CD4-positive, alpha-beta memory T cell (primary cell): ENCODE measurements at regions of chr16 and their contacts with region 1.

Region 1: DNA sequence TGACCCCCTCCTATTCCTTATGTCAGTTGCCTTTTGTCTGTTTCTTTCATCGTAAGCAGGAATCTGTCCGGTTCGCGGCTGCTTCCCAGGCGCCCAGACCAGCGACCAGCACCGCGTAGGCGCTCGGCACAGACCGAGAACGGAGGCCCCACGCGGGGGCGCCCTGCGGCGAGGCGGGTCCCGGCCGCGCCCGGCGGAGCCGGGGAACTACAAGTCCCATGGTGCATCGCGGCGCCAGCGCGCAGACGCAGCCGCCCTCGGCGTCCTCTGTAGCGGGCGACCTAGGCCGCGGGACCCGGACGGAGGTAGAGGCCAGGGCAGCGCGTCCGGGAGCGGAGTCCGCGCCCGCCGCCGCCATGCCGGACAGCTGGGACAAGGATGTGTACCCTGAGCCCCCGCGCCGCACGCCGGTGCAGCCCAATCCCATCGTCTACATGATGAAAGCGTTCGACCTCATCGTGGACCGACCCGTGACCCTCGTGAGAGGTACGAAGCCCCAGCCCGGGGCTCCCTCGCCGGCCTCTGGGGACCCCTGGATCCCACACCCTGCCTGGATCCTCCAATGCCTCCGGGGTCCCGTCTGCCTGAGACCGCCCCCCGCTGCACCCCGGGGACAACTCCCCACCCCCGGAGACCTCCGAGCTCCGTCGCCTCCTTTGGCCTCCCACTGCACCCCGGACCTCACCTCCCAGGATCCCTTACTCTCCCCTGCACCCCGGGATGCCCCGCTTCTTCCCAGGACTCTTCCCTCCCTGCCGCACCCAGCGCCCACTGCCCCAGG is at the start of gene NDUFB10:
- DNase-seq: peak; percentile 84 to 90 (median 87)
- H3K4me3 ChIP-seq: peak within 1 kb of the TSS; percentile 69 to 89
- H3K4me3 Mint-ChIP-seq: peak within 1 kb of the TSS; percentile 88 to 94 (median 92)
- H3K27ac ChIP-seq: peak within 1 kb of the TSS; percentile 78
- H3K27ac Mint-ChIP-seq: peak within 1 kb of the TSS; percentile 86 to 99 (median 95)
- H3K4me1 ChIP-seq: peaks cover 47% of the 10 kb centered on the region
- H3K4me1 Mint-ChIP-seq: peaks cover 26 to 53% (median 40%) of the 10 kb centered on the region in 4 donors
- H3K27me3 ChIP-seq: no peaks in the 10 kb centered on the region
- H3K27me3 Mint-ChIP-seq: no peaks in the 10 kb centered on the region
- total RNA-seq, gene NDUFB10: 76.5 to 86.2 TPM

Region 2: GRCh38 chr16:1942810-1943726 is 16.4 kb before region 1 on chr16 and contains the start of gene MSRB1:
- CTCF ChIA-PET with region 1: interaction called, 4 read pairs
- POLR2A ChIA-PET with region 1: interaction called, 34 read pairs
- intact Hi-C with region 1: loop called (anchors 1 kb)
- DNase-seq: peak; percentile 97 to 99 (median 98)
- H3K4me3 ChIP-seq: peak within 1 kb of the TSS; percentile 52 to 90
- H3K4me3 Mint-ChIP-seq: peak within 1 kb of the TSS; percentile 82 to 91 (median 86)
- H3K27ac ChIP-seq: peak within 1 kb of the TSS; percentile 58
- H3K27ac Mint-ChIP-seq: peak within 1 kb of the TSS; percentile 64 to 91 (median 70)
- H3K4me1 ChIP-seq: peaks cover 21% of the 10 kb centered on the region
- H3K4me1 Mint-ChIP-seq: peaks cover 0 to 26% (median 7%) of the 10 kb centered on the region in 4 donors
- H3K27me3 ChIP-seq: no peaks in the 10 kb centered on the region
- H3K27me3 Mint-ChIP-seq: no peaks in the 10 kb centered on the region
- total RNA-seq, gene MSRB1: 9.3 to 10.6 TPM

Region 3: DNA sequence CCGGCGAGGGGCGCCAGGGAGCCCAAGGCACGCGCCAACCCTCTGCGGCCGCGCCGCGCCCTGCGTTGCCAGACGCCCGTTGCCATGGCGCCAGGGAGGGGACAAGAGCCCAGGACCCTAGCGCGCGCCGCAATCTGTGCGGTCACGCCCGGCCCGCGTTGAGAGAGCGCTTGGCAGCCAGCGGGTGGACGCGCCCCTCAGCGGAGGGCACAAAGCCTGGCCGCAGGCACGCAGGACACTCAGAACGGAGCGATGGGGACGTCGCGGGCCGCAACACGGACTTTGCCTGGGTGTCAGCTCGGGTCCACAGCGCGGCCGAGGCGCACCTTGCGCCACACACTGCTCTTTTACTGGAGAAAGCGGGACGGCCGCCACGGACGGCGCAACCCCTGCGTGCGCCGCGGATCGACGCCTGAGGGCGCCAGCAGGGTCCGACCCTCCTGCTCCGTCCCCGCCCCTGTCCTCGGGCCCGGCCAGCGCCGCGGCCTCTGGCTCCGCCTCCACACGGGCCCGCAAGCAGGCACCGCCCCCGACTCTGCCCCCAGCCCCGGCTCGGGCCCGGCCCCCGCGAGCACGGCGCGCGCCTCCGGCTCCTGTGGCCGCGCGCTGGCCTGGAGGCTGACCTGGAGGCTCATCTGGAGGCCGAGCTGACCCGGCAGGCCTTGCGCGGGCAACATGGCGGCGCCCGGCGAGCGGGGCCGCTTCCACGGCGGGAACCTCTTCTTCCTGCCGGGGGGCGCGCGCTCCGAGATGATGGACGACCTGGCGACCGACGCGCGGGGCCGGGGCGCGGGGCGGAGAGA is 24.3 kb after region 1 on chr16 and contains the start of gene GFER:
- CTCF ChIA-PET with region 1: interaction called, 4 read pairs
- POLR2A ChIA-PET with region 1: interaction called, 99 read pairs
- intact Hi-C with region 1: loop called (anchors 1 kb)
- DNase-seq: peak; percentile 47 to 70 (median 63)
- H3K4me3 ChIP-seq: peak within 1 kb of the TSS; percentile 52 to 64
- H3K4me3 Mint-ChIP-seq: peak within 1 kb of the TSS; percentile 78 to 89 (median 86)
- H3K27ac ChIP-seq: peak within 1 kb of the TSS; percentile 57
- H3K27ac Mint-ChIP-seq: peak within 1 kb of the TSS; percentile 57 to 91 (median 86)
- H3K4me1 ChIP-seq: peaks cover 22% of the 10 kb centered on the region
- H3K4me1 Mint-ChIP-seq: peaks cover 4 to 22% (median 15%) of the 10 kb centered on the region in 4 donors
- H3K27me3 ChIP-seq: peaks cover 20% of the 10 kb centered on the region
- H3K27me3 Mint-ChIP-seq: peaks cover 11 to 14% of the 10 kb centered on the region in 2 donors
- total RNA-seq, gene GFER: 19.6 to 22.6 TPM